Sigmoid colon (tissue), 7 donors: ENCODE measurements at regions of chr4 and their contacts with region 1.

Region 1: DNA sequence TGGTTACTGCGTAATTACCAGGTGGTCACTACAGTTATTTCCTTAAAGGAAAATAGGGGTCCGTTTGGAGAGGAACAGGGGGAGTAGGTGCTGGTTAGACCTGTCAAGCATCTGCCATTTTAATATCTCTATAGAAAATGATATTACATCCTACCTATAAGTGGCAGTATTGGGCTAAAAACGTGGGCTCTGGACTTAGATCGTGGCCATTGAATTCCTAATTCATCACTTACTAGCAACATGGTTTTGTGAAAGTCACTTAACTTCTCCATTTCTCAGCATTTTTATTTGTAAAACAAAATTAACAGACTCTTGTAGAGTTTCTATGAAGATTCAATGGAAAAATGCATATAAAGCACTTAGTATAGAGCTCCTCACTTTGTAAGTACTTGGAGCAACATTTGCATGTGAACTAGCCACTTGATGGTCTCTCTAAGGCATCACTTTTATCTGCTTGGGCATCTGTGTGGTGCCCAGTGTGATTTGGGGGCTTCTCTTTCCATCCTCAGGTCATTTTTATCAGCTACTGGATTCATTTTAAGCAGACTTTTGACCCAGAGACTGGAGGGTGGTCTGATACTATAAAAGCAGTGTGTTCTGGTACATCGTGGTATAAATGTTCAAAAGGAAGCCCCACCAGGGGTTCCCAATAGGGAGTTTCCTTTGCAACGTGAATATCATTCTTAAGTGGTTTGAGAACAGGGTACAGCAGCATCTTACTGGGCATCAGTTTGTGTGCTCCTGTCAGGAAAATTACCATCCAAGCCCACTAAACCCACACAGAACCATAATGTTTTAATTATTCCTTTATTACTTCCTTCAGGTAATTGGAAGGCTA is 42.7 kb upstream of the RASSF6 start:
- DNase-seq: no peak
- H3K4me3 ChIP-seq: no peak overlapping the region
- H3K27ac ChIP-seq: no peak overlapping the region
- H3K4me1 ChIP-seq: no peaks in the 10 kb centered on the region
- H3K27me3 ChIP-seq: no peaks in the 10 kb centered on the region
- CTCF ChIP-seq: peak in 3 of 4 experiments; percentile 43 to 55 (median 48)
- EP300 ChIP-seq: no peak
- POLR2A ChIP-seq: no peak

Region 2: GRCh38 chr4:73704314-73705055 is 41.6 kb after region 1 on chr4:
- intact Hi-C with region 1: no loop called
- DNase-seq: peak; percentile 87
- H3K4me3 ChIP-seq: no peak overlapping the region
- H3K27ac ChIP-seq: peak overlapping the region; percentile 32 to 68 (median 59)
- H3K4me1 ChIP-seq: peaks cover 0 to 34% (median 28%) of the 10 kb centered on the region in 4 donors
- H3K27me3 ChIP-seq: no peaks in the 10 kb centered on the region
- CTCF ChIP-seq: no peak
- EP300 ChIP-seq: peak in 1 of 4 donors; percentile 52
- POLR2A ChIP-seq: no peak

Region 3: DNA sequence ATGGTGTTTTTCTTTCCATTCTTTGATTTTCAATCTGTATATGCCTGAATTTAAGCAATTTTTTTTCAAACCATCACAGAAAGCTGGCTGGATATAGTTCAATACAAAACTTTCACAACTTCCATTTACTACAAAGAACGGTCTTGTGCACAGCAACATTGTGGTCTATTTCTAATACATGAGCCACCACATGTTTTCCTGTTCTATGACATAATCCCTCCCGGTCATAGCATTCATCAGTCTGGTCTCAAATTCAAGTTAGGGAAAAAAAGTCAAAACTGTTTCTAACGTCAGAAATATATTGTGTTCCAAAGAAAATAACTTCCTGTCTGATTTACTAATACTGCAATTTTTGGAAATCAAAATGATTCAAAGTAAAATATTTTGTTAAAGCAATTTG is 166.0 kb after region 1 on chr4:
- intact Hi-C with region 1: no loop called
- DNase-seq: no peak
- H3K4me3 ChIP-seq: no peak overlapping the region
- H3K27ac ChIP-seq: no peak overlapping the region
- H3K4me1 ChIP-seq: no peaks in the 10 kb centered on the region
- H3K27me3 ChIP-seq: no peaks in the 10 kb centered on the region
- CTCF ChIP-seq: no peak
- EP300 ChIP-seq: no peak
- POLR2A ChIP-seq: no peak

Region 4: GRCh38 chr4:73922766-73923630 is 260.1 kb after region 1 on chr4:
- intact Hi-C with region 1: loop called (anchors 5 kb)
- DNase-seq: no peak
- H3K4me3 ChIP-seq: no peak overlapping the region
- H3K27ac ChIP-seq: no peak overlapping the region
- H3K4me1 ChIP-seq: peaks cover 0 to 12% (median 4%) of the 10 kb centered on the region in 4 donors
- H3K27me3 ChIP-seq: no peaks in the 10 kb centered on the region
- CTCF ChIP-seq: no peak
- EP300 ChIP-seq: no peak
- POLR2A ChIP-seq: no peak